Adrenal gland (tissue), 19 donors: ENCODE measurements at regions of chr19 and their contacts with region 1.

Region 1: DNA sequence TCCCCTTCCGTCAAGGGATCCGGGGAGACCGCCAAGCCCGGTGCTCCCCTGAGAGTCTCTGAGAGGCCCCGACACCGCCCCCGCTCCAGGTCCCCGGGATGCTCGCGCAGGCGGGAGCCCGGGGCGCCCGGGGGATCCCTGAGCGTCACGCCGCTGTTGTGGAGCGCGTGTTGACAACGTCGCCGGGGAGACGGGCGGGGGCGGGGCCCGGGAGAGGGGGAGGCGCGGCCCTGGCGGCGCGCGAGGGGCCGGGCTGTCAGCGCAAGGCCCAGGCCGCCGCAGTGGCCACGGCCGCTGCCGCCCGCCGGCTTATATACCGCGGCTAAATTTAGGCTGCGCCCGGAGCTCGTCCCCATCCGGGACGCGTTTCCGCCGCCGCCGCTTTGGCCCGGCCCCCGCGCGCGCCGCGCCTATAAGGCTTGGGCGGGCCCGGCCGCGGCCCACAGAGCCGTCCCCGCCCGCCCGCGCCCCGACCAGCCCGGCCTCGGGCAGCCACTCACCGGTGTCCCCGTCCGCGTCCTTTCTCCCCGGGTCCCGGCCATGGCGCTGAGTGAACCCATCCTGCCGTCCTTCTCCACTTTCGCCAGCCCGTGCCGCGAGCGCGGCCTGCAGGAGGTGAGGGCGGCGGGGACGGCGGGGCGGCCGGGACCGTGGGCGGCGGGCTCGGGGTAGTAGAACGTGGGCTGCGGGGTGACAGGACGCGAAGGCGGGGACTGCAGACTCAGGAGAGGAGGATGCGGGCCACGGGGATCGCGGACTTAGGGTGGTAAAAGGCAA is at the start of gene KLF2:
- DNase-seq: peak; percentile 92 to 94 (median 94)
- H3K4me3 ChIP-seq: peak within 1 kb of the TSS in 3 of 4 donors; percentile 33 to 95 (median 94)
- H3K27ac ChIP-seq: peak within 1 kb of the TSS in 4 of 5 donors; percentile 89 to 98 (median 93)
- H3K4me1 ChIP-seq: peaks cover 0 to 23% of the 10 kb centered on the region in 2 donors
- H3K27me3 ChIP-seq: no peaks in the 10 kb centered on the region
- CTCF ChIP-seq: no peak
- POLR2A ChIP-seq: peak; percentile 91 to 95
- total RNA-seq, gene KLF2: 2.2 to 52.3 (median 26.8) TPM

Region 2: DNA sequence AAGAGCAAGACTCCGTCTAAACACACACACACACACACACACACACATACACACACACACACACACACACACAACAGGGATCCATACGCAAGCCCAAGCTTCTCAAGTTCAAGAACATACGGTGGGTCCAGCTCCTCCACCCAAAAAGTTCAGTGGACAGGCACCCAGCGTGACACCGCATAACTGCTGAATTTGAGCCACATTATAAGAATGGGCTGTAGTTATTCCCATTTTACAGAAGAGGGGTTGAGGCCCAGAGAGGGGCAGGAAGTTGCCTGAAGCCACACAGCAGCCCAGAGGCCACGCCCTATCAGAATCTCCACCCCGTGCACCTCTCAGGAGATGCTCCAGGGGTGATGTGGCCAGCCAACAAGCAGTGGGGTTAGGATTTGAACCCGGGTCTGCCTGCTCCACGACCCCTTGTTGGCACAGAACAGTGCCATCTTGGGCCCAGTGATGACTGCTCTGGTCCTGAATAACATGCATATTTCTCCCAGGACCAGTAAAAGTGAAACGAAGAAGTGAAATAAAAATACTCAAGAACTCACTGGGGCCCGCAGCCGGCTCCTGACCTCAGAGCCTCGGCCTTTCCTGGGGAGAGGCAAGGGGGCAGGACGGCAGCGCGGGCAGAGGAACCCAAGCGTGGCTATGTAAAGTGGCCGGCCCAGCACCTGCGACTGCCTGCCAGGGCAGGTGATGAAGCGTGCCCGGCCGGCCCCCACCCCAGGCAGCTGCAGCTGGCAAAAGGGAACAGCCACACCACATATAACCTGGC is 65.0 kb before region 1 on chr19:
- intact Hi-C with region 1: loop called (anchors 10 kb)
- DNase-seq: peak in 1 of 7 donors; percentile 24
- H3K4me3 ChIP-seq: no peak overlapping the region
- H3K27ac ChIP-seq: peak overlapping the region in 4 of 5 donors; percentile 45 to 93 (median 58)
- H3K4me1 ChIP-seq: peaks cover 0 to 9% of the 10 kb centered on the region in 2 donors
- H3K27me3 ChIP-seq: no peaks in the 10 kb centered on the region
- CTCF ChIP-seq: no peak
- POLR2A ChIP-seq: no peak